ENCODE measurements at regions of chr9 and their contacts with region 1.

Region 1: GRCh38 chr9:14314929-14315645 is 1.1 kb upstream of the NFIB start:
- DNase-seq: peak; percentile 85
- H3K4me3 ChIP-seq: peak overlapping the region; percentile 35 to 79 (median 55)
- H3K27ac ChIP-seq: peak overlapping the region; percentile 75 to 95 (median 91)
- H3K4me1 ChIP-seq: peaks cover 3 to 77% (median 40%) of the 10 kb centered on the region in 6 donors
- H3K27me3 ChIP-seq: peaks cover 0 to 77% (median 24%) of the 10 kb centered on the region in 7 donors
- CTCF ChIP-seq: peak in 1 of 11 experiments; percentile 22
- POLR2A ChIP-seq: no peak

Region 2: DNA sequence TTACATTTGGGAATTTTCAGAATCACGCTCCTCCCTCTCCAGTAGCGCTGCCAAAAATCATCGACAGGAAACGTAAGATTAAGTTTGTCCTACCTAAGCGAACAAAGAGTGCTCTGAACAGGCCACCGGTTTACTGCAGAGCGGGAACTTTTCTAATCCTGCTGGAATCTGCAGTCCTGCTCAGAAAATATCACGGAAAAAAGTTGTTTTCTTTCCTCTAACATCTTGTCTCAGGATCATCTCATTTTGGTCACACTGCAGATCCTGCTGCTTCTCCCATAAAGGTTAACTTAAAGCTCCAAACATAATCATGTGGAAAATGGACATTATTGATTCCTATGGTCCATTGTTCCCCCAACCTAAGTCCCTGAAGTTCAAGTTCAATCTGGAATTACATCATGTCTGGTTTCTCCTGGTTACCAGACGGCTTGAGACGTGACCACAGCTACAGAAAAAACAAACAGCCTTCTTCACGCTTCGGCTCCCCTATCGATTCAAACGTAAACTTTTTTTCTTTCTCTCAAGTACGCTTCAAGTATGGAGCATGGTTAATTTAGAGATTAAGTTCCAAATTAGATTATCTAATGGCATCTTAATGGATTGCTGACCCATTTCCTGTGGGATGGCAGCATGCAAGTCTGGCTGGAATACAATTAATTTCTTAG is 218.7 kb before region 1 on chr9:
- intact Hi-C with region 1: loop called (anchors 10 kb)
- DNase-seq: no peak
- H3K4me3 ChIP-seq: peak overlapping the region in 3 of 8 donors; percentile 5 to 42 (median 18)
- H3K27ac ChIP-seq: peak overlapping the region; percentile 3 to 87 (median 70)
- H3K4me1 ChIP-seq: peaks cover 0 to 30% (median 9%) of the 10 kb centered on the region in 6 donors
- H3K27me3 ChIP-seq: no peaks in the 10 kb centered on the region
- CTCF ChIP-seq: no peak
- POLR2A ChIP-seq: no peak

Region 3: DNA sequence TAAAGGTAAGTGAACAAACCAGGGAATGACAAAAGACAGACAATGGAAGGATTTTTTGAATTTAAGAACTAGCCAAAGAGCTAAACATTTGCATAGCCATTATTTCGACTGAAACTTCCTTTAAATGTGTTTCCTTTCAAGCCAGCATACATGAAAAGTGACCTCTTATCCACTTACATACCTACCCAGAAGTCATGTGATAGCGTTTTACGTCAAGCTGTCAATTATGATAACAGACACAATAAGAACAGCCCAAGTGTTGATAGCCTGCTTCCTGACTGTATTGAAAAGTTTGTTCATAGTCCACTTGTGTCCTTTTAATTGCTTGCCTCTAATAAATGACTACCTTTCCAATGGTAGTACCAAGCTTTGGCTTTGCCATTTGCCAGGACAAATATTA is 207.1 kb before region 1 on chr9:
- intact Hi-C with region 1: no loop called
- DNase-seq: no peak
- H3K4me3 ChIP-seq: no peak overlapping the region
- H3K27ac ChIP-seq: peak overlapping the region; percentile 2 to 62 (median 45)
- H3K4me1 ChIP-seq: no peaks in the 10 kb centered on the region
- H3K27me3 ChIP-seq: no peaks in the 10 kb centered on the region
- CTCF ChIP-seq: no peak
- POLR2A ChIP-seq: no peak

Region 4: DNA sequence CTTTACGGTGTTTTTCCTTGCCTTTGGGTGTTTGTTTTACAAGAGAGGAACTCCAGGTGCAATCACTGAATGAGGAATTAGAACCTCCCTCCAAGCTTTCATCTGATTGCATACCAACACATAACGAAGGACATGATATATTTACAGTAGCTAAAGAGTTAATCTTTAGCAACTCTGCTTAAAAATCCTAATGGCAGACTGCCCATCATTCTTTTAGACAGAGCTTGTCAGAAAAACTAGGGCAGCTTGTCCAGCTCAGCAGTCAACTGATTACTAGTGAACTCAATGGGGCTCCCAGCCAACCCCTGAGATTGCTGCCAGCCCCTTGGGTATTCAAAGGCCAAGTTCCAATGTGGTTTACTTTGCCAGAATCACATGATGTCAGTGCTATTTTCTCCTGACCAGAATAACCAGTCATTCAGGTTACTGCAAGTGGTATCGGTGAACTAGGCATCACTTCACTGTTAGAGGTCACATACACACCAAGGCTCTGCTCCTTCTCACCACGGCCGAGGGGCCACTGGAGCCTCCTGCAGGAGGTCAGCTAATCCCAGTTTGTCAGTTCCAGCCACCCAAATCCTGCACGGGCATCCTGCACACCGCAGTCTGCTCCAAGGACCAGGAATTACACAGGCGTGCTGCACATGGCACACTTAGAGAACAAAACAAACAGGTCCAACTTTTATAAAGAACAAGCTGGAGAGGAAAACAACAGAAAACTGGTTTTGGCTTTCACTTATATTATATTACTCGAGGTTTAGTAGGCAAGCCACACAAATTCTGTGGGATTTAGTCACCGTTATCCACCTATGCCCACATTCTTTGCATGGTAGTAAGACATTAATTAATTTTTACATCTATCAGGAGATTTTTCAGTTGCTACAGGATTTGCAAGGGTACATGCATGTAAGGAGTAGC is 63.7 kb before region 1 on chr9:
- intact Hi-C with region 1: no loop called
- DNase-seq: no peak
- H3K4me3 ChIP-seq: no peak overlapping the region
- H3K27ac ChIP-seq: peak overlapping the region in 1 of 8 donors; percentile 18
- H3K4me1 ChIP-seq: peaks cover 0 to 14% (median 4%) of the 10 kb centered on the region in 6 donors
- H3K27me3 ChIP-seq: no peaks in the 10 kb centered on the region
- CTCF ChIP-seq: no peak
- POLR2A ChIP-seq: no peak